Adrenal gland (tissue), 19 donors: ENCODE measurements at regions of chr4 and their contacts with region 1.

Region 1: GRCh38 chr4:122914938-122915337 is 7.5 kb downstream of the NUDT6 start:
- DNase-seq: no peak
- H3K4me3 ChIP-seq: no peak overlapping the region
- H3K27ac ChIP-seq: no peak overlapping the region
- H3K4me1 ChIP-seq: no peaks in the 10 kb centered on the region
- H3K27me3 ChIP-seq: no peaks in the 10 kb centered on the region
- CTCF ChIP-seq: no peak
- POLR2A ChIP-seq: no peak

Region 2: GRCh38 chr4:122758033-122758432 is 156.9 kb before region 1 on chr4:
- intact Hi-C with region 1: loop called in 1 of 2 experiments (anchors 5 kb)
- DNase-seq: no peak
- H3K4me3 ChIP-seq: no peak overlapping the region
- H3K27ac ChIP-seq: no peak overlapping the region
- H3K4me1 ChIP-seq: peaks cover 0 to 8% of the 10 kb centered on the region in 2 donors
- H3K27me3 ChIP-seq: no peaks in the 10 kb centered on the region
- CTCF ChIP-seq: peak; percentile 46 to 77 (median 63)
- POLR2A ChIP-seq: no peak